ENCODE measurements at regions of chr1 and their contacts with region 1.

Region 1: GRCh38 chr1:26145041-26145959 is 13.6 kb upstream of the FAM110D start:
- DNase-seq: peak; percentile 67 to 80
- ATAC-seq: peak; percentile 91 to 99
- H3K4me3 ChIP-seq: no peak overlapping the region
- H3K27ac ChIP-seq: no peak overlapping the region
- H3K4me1 ChIP-seq: no peaks in the 10 kb centered on the region
- CTCF ChIP-seq: peak; percentile 71
- EP300 ChIP-seq: no peak
- POLR2A ChIP-seq: no peak
- RAD21 ChIP-seq: peak; percentile 82 to 83

Region 2: DNA sequence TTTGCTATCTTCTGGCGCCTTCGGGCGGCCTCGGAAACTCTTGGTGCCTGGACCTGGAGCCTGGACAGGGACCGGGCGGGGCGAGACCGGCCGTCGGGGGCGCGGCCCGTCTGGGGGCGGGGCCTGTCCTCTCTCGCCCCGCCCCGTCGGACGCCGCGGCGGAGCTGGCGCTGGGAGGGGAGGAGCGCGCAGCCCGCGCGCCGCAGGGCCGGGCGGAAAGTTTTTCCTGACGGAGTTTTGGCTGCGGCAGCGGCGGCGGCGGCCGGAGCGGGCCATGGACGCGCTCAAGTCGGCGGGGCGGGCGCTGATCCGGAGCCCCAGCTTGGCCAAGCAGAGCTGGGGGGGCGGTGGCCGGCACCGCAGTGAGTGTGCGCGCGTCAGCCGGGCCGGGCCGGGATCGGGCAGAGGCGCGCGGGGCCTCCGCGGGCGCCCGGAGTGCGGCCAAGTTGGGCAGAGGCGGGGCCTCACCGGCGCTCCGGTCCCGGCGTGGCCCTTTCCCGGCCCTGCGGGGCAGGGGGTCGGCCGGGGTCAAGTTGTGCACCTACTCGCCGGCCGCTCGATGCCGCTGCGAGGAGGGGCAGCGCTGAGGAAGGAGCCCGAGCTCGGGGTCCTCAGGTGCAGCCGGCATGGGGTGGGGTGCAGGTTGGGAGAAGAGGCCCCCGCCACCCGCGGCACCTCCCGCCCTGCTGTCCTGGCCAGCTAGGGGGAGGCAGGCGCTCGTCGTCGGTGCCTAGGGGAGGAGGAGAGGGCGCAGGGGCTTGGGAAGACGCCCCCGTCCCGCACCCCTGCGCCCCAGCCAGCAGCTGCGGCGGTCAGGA is 601.7 kb before region 1 on chr1 and contains the start of gene LDLRAP1:
- CTCF ChIA-PET with region 1: no interaction called
- POLR2A ChIA-PET with region 1: no interaction called
- DNase-seq: peak; percentile 59 to 62
- ATAC-seq: peak; percentile 86 to 90
- H3K4me3 ChIP-seq: peak within 1 kb of the TSS; percentile 64
- H3K27ac ChIP-seq: peak within 1 kb of the TSS; percentile 76 to 90
- H3K4me1 ChIP-seq: peaks cover 14% of the 10 kb centered on the region
- CTCF ChIP-seq: no peak
- EP300 ChIP-seq: no peak
- POLR2A ChIP-seq: peak; percentile 51
- RAD21 ChIP-seq: no peak
- polyA plus RNA-seq, gene LDLRAP1: 7.9 and 9.2 TPM in 2 replicates

Region 3: GRCh38 chr1:26102526-26102925 is 42.8 kb before region 1 on chr1:
- CTCF ChIA-PET with region 1: interaction called, 143 read pairs
- POLR2A ChIA-PET with region 1: interaction called, 7 read pairs
- DNase-seq: no peak
- ATAC-seq: no peak
- H3K4me3 ChIP-seq: no peak overlapping the region
- H3K27ac ChIP-seq: no peak overlapping the region
- H3K4me1 ChIP-seq: peaks cover 7% of the 10 kb centered on the region; the same call in 2 of the 3 replicates
- CTCF ChIP-seq: no peak
- EP300 ChIP-seq: no peak
- POLR2A ChIP-seq: no peak
- RAD21 ChIP-seq: no peak

Region 4: DNA sequence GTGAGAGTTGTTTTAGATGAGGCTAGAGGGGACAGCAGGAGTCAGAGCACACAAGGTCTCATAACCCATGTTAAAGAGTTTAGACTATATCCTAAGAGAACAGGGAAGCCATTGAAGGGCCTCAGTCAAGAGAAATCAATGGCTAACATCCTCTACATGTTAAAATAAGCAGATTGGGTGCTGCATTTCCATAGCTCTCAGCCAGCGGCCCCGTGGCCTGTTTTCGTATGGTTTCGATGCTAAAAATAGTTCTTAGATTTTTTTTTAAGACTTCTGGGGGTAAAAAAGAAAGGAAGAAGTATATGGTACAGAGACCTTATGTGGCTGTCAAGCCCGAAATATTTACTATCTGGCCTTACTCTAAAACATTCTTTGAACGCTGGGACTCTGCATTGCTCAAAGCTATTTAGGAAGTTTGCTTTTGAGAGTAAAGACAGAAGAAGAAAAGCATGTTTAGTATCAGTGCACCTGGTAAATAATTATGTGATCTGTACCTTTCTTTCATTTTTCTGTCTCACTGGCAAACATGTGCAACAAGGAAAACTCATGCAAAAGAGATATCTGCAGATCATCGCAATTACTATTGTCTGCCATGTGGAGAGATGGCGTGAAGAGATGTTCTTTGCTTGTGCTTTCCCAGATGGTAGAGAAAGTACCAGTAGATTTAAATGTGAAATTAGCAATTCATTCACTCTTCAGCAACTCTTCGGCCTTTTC is 25.2 kb before region 1 on chr1:
- CTCF ChIA-PET with region 1: interaction called, 46 read pairs
- POLR2A ChIA-PET with region 1: interaction called, 8 read pairs
- DNase-seq: no peak
- ATAC-seq: no peak
- H3K4me3 ChIP-seq: no peak overlapping the region
- H3K27ac ChIP-seq: no peak overlapping the region
- H3K4me1 ChIP-seq: peaks cover 34% of the 10 kb centered on the region
- CTCF ChIP-seq: no peak
- EP300 ChIP-seq: no peak
- POLR2A ChIP-seq: no peak
- RAD21 ChIP-seq: no peak

Region 5: GRCh38 chr1:26132128-26132833 is 13.0 kb before region 1 on chr1:
- CTCF ChIA-PET with region 1: interaction called, 46 read pairs
- POLR2A ChIA-PET with region 1: no interaction called
- DNase-seq: peak in 1 of 2 experiments; percentile 32
- ATAC-seq: no peak
- H3K4me3 ChIP-seq: no peak overlapping the region
- H3K27ac ChIP-seq: no peak overlapping the region
- H3K4me1 ChIP-seq: no peaks in the 10 kb centered on the region
- CTCF ChIP-seq: no peak
- EP300 ChIP-seq: no peak
- POLR2A ChIP-seq: no peak
- RAD21 ChIP-seq: no peak

Region 6: GRCh38 chr1:26259578-26259977 is 114.3 kb after region 1 on chr1:
- CTCF ChIA-PET with region 1: no interaction called
- POLR2A ChIA-PET with region 1: no interaction called
- DNase-seq: no peak
- ATAC-seq: no peak
- H3K4me3 ChIP-seq: no peak overlapping the region
- H3K27ac ChIP-seq: no peak overlapping the region
- H3K4me1 ChIP-seq: no peaks in the 10 kb centered on the region
- CTCF ChIP-seq: no peak
- EP300 ChIP-seq: no peak
- POLR2A ChIP-seq: no peak
- RAD21 ChIP-seq: no peak

Region 7: GRCh38 chr1:26306290-26307229 is 161.3 kb after region 1 on chr1 and contains the start of gene UBXN11:
- CTCF ChIA-PET with region 1: no interaction called
- POLR2A ChIA-PET with region 1: no interaction called
- DNase-seq: peak; percentile 94 to 99
- ATAC-seq: peak; percentile 99 to 100
- H3K4me3 ChIP-seq: peak within 1 kb of the TSS; percentile 63
- H3K27ac ChIP-seq: peak within 1 kb of the TSS; percentile 74 to 88
- H3K4me1 ChIP-seq: peaks cover 13% of the 10 kb centered on the region
- CTCF ChIP-seq: no peak
- EP300 ChIP-seq: no peak
- POLR2A ChIP-seq: peak; percentile 45
- RAD21 ChIP-seq: no peak
- polyA plus RNA-seq, gene UBXN11: 6.8 and 7.6 TPM in 2 replicates